ENCODE measurements at regions of chr4 and their contacts with region 1.

Region 1: DNA sequence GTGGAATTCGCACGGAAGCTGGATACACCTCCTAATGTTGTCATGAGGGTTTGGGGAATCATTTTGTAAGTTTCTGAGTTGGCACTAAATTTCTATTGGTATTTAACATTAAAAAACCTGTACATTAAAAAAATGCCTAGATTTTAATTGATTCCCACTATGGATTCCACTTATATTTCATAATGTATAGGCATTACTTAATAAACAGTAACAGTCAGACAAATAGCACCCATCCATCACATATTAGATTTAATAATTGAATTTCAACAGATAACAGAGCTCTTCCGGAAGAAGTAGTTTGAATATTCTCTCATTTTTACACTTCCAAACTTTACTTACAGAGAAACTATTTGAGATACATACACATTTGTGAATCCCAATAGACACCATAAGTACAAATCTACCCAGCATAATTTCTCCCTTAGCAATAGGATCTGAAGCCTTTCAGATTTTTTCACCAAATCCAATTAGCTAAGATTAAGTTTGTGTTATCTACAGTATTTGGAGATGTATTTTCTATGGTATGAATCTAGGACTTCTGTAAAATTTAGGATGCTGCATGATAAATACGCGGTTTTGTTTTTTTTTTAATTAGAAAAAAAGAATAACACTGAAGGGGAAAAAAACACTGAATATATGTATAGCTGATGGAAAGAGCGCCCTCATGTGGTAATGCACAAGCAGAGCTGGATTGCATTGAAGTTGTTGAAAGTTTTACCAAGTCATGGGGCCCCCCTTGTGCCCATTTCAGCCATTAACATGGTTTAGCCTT is 12.2 kb upstream of the ODAM start:
- DNase-seq: no peak
- ATAC-seq: peak; percentile 93
- H3K4me3 ChIP-seq: no peak overlapping the region
- H3K27ac ChIP-seq: no peak overlapping the region
- H3K4me1 ChIP-seq: no peaks in the 10 kb centered on the region
- H3K27me3 ChIP-seq: no peaks in the 10 kb centered on the region
- CTCF ChIP-seq: peak; percentile 62 to 74 (median 73)
- EP300 ChIP-seq: no peak
- POLR2A ChIP-seq: no peak
- RAD21 ChIP-seq: peak; percentile 75

Region 2: DNA sequence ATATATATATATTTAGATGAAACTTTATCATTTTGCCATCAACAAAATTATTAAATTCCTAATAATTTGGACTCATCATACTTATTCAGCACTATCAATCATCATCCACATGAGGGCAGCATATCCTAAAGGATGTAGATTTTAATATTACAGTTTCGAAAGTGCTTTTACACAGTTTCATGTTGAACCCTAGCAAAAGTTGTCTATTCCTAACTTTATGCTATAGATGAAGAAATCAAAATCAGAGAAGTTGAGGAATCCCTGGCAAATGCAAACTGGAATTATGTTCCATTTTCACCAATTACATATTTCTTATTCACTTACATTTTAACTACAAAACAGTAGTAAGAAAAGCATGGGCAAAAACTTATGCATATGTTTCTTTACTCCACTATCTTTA is 493.8 kb before region 1 on chr4:
- CTCF ChIA-PET with region 1: interaction called, 9 read pairs
- POLR2A ChIA-PET with region 1: no interaction called
- RAD21 ChIA-PET with region 1: interaction called, 3 read pairs
- SMC1A ChIA-PET with region 1: interaction called, 11 read pairs
- in situ Hi-C with region 1: loop called (anchors 5 kb)
- intact Hi-C with region 1: loop called (anchors 2 kb)
- DNase-seq: no peak
- ATAC-seq: peak; percentile 44; the same call in 1 of the 3 replicates
- H3K4me3 ChIP-seq: no peak overlapping the region
- H3K27ac ChIP-seq: no peak overlapping the region
- H3K4me1 ChIP-seq: no peaks in the 10 kb centered on the region
- H3K27me3 ChIP-seq: no peaks in the 10 kb centered on the region
- CTCF ChIP-seq: peak; percentile 21 to 61 (median 39); a peak in 3 of 6 replicates
- EP300 ChIP-seq: no peak
- POLR2A ChIP-seq: no peak
- RAD21 ChIP-seq: peak; percentile 85

Region 3: GRCh38 chr4:69896530-69897116 is 286.7 kb before region 1 on chr4:
- CTCF ChIA-PET with region 1: interaction called, 36 read pairs
- POLR2A ChIA-PET with region 1: no interaction called
- RAD21 ChIA-PET with region 1: interaction called, 18 read pairs
- SMC1A ChIA-PET with region 1: interaction called, 17 read pairs
- in situ Hi-C with region 1: no loop called
- intact Hi-C with region 1: loop called (anchors 1 kb)
- DNase-seq: no peak
- ATAC-seq: no peak
- H3K4me3 ChIP-seq: no peak overlapping the region
- H3K27ac ChIP-seq: no peak overlapping the region
- H3K4me1 ChIP-seq: no peaks in the 10 kb centered on the region
- H3K27me3 ChIP-seq: no peaks in the 10 kb centered on the region
- CTCF ChIP-seq: peak; percentile 19 to 44 (median 34); a peak in 3 of 6 replicates
- EP300 ChIP-seq: no peak
- POLR2A ChIP-seq: no peak
- RAD21 ChIP-seq: peak; percentile 68

Region 4: DNA sequence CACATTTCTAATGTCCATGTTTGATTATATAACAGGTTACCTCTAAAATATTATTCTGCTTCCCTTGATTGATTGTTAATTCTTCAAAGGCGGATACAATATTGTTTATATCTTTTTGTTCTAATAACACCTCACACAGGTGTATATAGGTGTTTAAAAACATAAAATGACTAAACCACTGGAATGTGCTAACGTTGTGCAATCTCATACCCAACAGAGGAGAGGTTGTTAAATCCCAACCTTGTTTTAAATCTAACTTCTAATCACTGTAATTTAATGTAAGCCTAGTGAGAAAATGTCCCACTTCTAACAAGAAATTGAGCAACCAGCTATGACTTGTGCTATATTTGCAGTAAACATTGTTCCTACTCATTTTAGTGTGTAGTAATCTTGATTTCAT is 13.5 kb after region 1 on chr4:
- CTCF ChIA-PET with region 1: interaction called, 10 read pairs
- POLR2A ChIA-PET with region 1: no interaction called
- RAD21 ChIA-PET with region 1: interaction called, 3 read pairs
- SMC1A ChIA-PET with region 1: interaction called, 7 read pairs
- in situ Hi-C with region 1: no loop called
- intact Hi-C with region 1: no loop called
- DNase-seq: no peak
- ATAC-seq: no peak
- H3K4me3 ChIP-seq: no peak overlapping the region
- H3K27ac ChIP-seq: no peak overlapping the region
- H3K4me1 ChIP-seq: no peaks in the 10 kb centered on the region
- H3K27me3 ChIP-seq: no peaks in the 10 kb centered on the region
- CTCF ChIP-seq: no peak
- EP300 ChIP-seq: no peak
- POLR2A ChIP-seq: no peak
- RAD21 ChIP-seq: no peak

Region 5: DNA sequence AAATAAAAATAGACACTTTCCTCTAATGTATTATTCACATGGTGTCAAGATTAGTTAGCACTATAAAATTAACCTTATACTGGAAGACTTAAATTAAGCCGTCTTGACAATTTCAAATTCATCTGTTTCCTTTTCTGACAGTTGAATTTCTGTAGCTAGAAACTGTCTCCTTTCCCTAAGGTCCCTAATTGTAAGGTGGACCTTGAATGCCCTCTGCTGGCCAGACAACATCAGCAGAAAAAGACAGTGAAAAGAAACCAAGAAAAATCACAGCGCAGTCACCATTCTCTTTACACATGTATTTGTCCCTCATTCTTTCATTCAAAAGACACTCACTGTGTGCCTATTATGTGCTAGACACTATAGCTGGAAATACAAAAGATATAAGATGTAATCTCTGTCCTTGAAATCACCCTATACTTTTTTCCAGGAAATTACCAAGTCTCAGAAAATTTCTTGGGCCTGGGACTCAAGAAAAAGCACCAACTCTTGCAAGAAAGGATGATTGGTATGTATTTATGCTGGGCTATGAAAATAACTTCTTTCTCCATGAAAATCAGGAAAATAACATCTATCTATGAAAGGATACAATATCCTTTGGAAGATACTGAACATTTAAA is 376.0 kb after region 1 on chr4:
- CTCF ChIA-PET with region 1: interaction called, 5 read pairs
- POLR2A ChIA-PET with region 1: no interaction called
- RAD21 ChIA-PET with region 1: interaction called, 5 read pairs
- SMC1A ChIA-PET with region 1: interaction called, 3 read pairs
- in situ Hi-C with region 1: no loop called
- intact Hi-C with region 1: loop called (anchors 2 kb)
- DNase-seq: no peak
- ATAC-seq: peak; percentile 84
- H3K4me3 ChIP-seq: no peak overlapping the region
- H3K27ac ChIP-seq: no peak overlapping the region
- H3K4me1 ChIP-seq: no peaks in the 10 kb centered on the region
- H3K27me3 ChIP-seq: no peaks in the 10 kb centered on the region
- CTCF ChIP-seq: peak; percentile 62 to 67 (median 67)
- EP300 ChIP-seq: no peak
- POLR2A ChIP-seq: no peak
- RAD21 ChIP-seq: peak; percentile 82